ENCODE measurements at regions of chr6 and their contacts with region 1.

Region 1: DNA sequence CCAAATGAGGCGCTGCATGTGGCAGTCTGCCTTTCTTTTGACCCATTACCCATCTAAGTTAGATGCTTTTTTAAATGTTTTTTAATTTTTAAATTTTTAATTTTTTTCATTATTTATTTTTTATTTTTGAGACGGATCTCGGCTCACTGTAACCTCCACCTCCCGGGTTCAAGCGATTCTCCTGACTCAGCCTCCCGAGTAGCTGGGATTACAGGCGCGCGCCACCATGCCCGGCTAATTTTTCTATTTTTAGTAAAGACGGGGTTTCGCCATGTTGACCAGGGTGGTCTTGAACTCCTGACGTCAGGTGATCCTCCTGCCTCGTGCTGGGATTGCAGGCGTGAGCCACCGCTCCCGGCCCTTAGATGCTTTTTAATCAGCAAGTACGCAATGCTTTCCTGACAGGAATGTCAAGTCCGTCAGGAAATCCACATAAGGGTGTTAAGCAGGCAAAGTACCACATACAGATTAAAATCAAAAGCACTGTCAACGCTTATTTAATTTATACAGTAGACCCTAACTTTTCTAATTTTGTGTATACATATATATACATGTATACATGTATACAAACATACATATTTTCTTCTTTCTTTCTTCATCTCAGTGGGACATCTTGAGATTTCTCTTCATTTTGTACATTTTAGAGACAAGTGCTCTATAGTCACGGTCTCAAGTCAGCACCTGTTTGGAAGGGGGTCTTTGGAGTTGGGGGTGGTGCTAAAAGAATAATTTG is 995 bp upstream of the GSTA4 start:
- DNase-seq: peak; percentile 35
- ATAC-seq: no peak
- H3K4me3 Mint-ChIP-seq: peak overlapping the region; percentile 83
- H3K27ac Mint-ChIP-seq: peak overlapping the region; percentile 98
- H3K4me1 Mint-ChIP-seq: peaks cover 28% of the 10 kb centered on the region
- H3K27me3 Mint-ChIP-seq: peaks cover 6% of the 10 kb centered on the region

Region 2: DNA sequence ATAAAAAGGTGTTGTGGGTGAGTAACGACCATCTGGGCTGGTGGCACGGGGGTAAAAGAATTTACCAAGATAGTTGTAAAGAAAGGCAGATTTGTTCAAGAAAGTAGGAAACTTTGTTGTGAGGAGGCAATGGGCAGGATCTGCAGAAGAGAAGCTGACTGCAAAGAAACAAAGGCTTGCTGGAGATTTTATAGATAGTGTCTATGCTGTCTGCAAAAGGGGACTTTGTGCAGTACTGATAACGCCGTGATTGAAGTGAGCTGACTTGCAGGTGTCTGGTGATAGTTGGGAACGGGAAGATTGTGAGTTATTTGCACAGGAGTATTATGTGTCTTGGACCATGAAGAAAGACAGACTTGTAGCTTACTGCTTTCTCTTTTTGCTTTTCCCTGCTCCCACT is 49.8 kb before region 1 on chr6:
- CTCF ChIA-PET with region 1: no interaction called
- POLR2A ChIA-PET with region 1: no interaction called
- DNase-seq: no peak
- ATAC-seq: no peak
- H3K4me3 Mint-ChIP-seq: no peak overlapping the region
- H3K27ac Mint-ChIP-seq: no peak overlapping the region
- H3K4me1 Mint-ChIP-seq: no peaks in the 10 kb centered on the region
- H3K27me3 Mint-ChIP-seq: peaks cover 18% of the 10 kb centered on the region

Region 3: DNA sequence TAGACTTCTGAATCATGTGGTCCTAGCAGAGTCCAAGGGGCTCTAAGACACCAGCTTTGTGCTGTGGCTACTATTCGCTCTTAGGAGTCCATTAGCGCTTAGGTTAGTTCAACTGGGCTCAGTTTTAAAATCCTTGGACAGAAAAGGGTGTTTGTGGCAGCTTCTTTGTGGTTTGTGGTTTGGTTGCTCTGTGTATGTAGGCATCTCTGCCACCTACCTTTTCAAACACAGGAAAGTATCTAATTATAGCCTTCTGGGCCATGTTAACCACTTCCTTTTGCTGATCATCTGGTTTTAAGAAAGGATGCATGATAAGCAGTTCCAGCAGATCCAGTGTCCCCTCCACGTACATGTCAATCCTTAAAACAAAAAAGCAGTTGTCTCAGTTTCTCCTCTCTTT is 11.8 kb before region 1 on chr6:
- CTCF ChIA-PET with region 1: interaction called, 39 read pairs
- POLR2A ChIA-PET with region 1: no interaction called
- DNase-seq: peak; percentile 79
- ATAC-seq: peak; percentile 89
- H3K4me3 Mint-ChIP-seq: peak overlapping the region; percentile 36
- H3K27ac Mint-ChIP-seq: peak overlapping the region; percentile 66
- H3K4me1 Mint-ChIP-seq: peaks cover 39% of the 10 kb centered on the region
- H3K27me3 Mint-ChIP-seq: peaks cover 30% of the 10 kb centered on the region

Region 4: GRCh38 chr6:53048431-53049195 is 52.5 kb after region 1 on chr6:
- CTCF ChIA-PET with region 1: interaction called, 10 read pairs
- POLR2A ChIA-PET with region 1: no interaction called
- DNase-seq: peak; percentile 33
- ATAC-seq: peak; percentile 89
- H3K4me3 Mint-ChIP-seq: peak overlapping the region; percentile 39
- H3K27ac Mint-ChIP-seq: no peak overlapping the region
- H3K4me1 Mint-ChIP-seq: peaks cover 22% of the 10 kb centered on the region
- H3K27me3 Mint-ChIP-seq: no peaks in the 10 kb centered on the region